ENCODE measurements at regions of chr10 and their contacts with region 1.

Region 1: DNA sequence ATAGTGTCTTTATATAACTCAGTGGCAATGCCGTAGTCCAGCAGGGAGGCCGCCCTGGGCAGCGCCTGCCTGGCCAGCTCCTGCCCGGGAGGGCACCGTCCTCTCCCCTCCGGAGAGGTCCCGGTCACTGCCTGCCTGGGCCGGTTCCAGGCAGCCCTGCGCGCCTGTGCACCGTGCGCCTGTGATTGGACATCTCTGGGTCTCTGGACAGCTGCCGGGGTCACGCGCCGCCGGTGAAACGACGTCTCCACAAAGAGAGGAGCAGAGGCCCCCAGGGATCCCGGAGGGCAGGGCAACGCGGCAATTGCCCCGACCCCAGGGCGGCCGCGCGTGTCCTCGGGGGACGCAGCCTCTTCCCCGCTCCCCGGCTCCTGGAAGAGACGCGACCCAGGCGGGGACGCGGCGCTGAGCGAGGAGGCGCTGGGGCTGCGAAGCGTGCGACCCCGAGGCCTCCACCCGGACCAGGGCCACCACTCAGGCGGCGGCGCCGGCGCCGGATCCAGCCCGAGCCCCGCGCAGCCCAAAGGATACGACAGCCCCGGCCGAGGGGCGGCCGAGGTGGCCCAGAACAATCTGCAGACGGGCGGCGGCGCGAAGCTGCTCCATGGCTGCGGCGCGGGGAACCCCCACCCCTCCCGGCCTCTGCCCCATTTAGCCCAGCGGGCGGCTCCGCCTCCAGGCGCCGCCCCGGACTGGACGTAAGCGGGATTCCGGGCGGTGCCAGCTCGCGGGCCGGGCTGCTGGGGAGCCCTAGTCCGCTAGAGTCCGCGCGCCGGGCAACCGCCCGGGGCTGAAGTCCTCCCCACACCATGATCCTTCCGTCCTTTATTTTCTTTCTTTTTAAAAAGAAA is at the start of gene PHYH:
- DNase-seq: peak; percentile 16
- H3K4me3 ChIP-seq: peak within 1 kb of the TSS; percentile 65
- CTCF ChIP-seq: no peak

Region 2: GRCh38 chr10:12181065-12181775 is 1118.4 kb before region 1 on chr10:
- CTCF ChIA-PET with region 1: no interaction called
- POLR2A ChIA-PET with region 1: no interaction called
- DNase-seq: no peak
- H3K4me3 ChIP-seq: no peak overlapping the region
- CTCF ChIP-seq: no peak

Region 3: DNA sequence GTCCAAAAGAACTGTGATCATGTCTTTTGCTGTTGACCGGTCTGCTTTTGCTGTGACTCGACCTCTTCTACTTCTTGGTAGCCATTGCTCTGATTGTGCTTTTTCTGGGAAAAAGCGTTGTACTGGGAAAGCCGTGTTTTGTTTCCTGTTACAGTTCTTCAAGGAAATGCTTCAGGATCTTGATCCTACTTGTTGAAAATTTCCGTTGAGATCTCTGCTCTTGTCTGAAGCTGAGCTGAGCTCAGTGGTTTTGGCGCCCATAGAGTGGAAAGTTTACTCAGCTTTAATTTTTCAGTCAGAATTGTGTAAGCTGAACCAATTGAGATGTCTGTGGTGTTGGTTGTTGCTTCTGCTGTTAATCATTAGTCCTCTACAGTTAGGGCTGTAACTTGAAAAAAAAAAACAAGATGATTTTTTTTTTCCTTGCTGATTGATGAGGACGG is 600.4 kb before region 1 on chr10:
- CTCF ChIA-PET with region 1: no interaction called
- POLR2A ChIA-PET with region 1: no interaction called
- DNase-seq: no peak
- H3K4me3 ChIP-seq: no peak overlapping the region
- CTCF ChIP-seq: no peak

Region 4: DNA sequence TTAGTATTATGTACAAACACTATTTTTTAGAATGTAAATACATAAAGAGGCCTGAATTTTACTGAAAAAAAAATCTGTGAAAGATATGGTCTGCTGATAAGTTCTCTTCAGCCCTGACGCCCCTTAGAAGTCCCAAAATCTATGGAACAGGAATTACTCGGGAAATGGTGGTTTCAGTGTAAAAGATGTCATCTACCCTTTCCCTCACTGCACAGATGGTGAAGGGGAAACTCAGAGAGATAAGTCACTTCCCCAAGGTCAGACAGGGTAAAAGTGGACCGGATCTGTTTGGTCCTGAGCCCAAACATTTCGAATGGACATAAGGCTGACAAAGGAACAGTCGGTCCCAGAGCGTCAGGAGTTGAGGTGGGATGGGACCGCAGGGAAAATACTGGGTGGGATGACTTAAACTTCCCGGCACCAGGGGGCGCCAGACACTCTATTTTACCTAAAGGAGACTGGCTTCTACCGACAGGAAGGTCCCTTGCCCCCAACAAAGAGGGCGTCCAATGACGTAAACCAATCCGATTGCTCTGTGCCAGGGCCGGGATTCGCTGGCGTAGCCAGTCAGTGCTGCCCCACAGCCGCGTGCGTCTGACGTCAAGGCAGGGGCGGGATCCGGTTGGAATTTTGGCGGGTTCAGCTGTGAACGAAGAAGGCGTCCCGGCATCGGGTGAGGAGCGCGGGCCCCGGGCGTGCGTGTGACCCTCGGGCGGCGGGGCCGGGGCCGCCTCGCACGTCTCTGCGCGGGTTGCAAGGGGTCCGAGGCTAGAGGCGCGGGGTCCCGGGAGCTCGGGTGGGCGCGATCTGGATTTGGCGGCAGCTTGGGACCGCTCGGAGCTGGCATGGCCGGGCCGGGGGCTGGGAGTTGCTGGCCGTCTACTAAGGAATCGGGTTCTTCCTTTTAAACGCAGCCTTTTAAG is 138.5 kb before region 1 on chr10 and contains the start of gene MCM10:
- CTCF ChIA-PET with region 1: interaction called, 77 read pairs
- POLR2A ChIA-PET with region 1: interaction called, 7 read pairs
- DNase-seq: peak; percentile 97
- H3K4me3 ChIP-seq: peak within 1 kb of the TSS; percentile 67
- CTCF ChIP-seq: peak; percentile 82

Region 5: DNA sequence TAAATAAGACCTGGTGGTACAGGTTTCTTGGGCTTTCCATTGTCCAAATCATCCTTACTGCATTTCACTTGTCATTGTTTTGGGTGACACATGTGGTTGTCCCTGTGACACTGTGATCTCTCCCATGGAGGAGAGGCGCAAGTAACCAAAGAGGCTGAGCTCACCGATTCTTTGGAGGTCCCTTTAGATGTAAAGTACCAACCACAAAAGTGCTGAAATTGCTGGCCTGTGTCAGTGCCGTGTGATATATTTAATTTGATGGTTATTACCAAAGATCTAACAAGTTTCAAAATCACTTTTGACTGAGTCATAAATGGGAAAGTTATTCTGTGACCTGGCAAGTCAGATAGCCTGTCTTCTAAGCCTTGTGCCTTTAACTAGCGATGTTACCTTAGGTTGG is 118.9 kb before region 1 on chr10:
- CTCF ChIA-PET with region 1: interaction called, 11 read pairs
- POLR2A ChIA-PET with region 1: no interaction called
- DNase-seq: no peak
- H3K4me3 ChIP-seq: no peak overlapping the region
- CTCF ChIP-seq: no peak

Region 6: GRCh38 chr10:13206546-13207443 is 92.9 kb before region 1 on chr10:
- CTCF ChIA-PET with region 1: interaction called, 56 read pairs
- POLR2A ChIA-PET with region 1: interaction called, 3 read pairs
- DNase-seq: no peak
- H3K4me3 ChIP-seq: no peak overlapping the region
- CTCF ChIP-seq: peak; percentile 53

Region 7: DNA sequence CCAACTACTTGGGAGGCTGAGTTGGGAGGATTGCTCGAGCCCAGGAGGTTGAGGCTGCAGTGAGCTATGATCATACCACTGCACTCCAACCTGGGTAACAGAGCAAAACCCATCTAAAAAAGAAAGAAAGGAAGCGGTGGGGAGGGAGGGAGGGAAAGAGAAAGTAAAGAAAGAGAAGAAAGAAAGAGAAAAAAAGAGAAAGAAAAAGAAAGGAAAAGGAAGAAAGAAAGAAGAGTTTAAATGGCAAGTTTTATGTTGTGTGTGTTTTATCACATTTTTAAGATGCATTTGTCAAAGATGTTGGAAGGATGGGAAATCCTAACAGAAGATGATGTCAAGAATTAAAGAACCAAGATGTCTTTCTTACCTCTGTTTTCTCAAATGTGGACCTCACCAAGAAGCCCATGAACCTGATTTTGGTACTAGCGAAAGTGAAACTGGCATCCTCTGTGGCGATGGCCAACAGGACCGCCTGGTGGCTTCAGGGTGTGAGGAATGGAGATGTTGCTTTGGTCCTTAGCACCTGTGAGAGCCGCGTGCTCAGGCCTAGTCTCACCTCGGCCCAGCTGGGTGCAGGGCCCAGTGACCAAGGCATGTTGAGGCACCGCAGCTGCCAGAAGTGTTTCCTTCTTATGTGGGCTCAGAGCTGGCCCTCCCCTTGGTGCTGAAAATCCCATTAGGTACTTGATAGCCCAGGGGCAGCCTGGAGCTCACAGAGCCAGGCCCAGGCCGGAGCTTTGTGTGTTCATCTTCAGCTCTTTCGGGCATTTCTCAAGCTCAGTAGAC is 75.3 kb before region 1 on chr10:
- CTCF ChIA-PET with region 1: no interaction called
- POLR2A ChIA-PET with region 1: no interaction called
- DNase-seq: no peak
- H3K4me3 ChIP-seq: no peak overlapping the region
- CTCF ChIP-seq: no peak

Region 8: GRCh38 chr10:13311177-13311575 is 11.5 kb after region 1 on chr10:
- CTCF ChIA-PET with region 1: interaction called, 23 read pairs
- POLR2A ChIA-PET with region 1: interaction called, 6 read pairs
- DNase-seq: no peak
- H3K4me3 ChIP-seq: no peak overlapping the region
- CTCF ChIP-seq: no peak

Region 9: GRCh38 chr10:13335881-13336280 is 36.2 kb after region 1 on chr10:
- CTCF ChIA-PET with region 1: interaction called, 11 read pairs
- POLR2A ChIA-PET with region 1: no interaction called
- DNase-seq: no peak
- H3K4me3 ChIP-seq: no peak overlapping the region
- CTCF ChIP-seq: no peak

Measured in AG04449 (cell line).